Activated CD8-positive, alpha-beta T cell treated with anti-CD3 and anti-CD28 coated beads, Interleukin-2, amount 10 ng/mL, durations not matched to agents 7 days and 5 days (primary cell): ENCODE measurements at regions of chr2 and their contacts with region 1.

Region 1: GRCh38 chr2:68909793-68910674 is 38.8 kb upstream of the BMP10 start:
- DNase-seq: peak; percentile 84
- ATAC-seq: no peak
- H3K4me3 Mint-ChIP-seq: no peak overlapping the region
- H3K27ac Mint-ChIP-seq: peak overlapping the region; percentile 5
- H3K4me1 Mint-ChIP-seq: peaks cover 37% of the 10 kb centered on the region
- H3K27me3 Mint-ChIP-seq: no peaks in the 10 kb centered on the region

Region 2: DNA sequence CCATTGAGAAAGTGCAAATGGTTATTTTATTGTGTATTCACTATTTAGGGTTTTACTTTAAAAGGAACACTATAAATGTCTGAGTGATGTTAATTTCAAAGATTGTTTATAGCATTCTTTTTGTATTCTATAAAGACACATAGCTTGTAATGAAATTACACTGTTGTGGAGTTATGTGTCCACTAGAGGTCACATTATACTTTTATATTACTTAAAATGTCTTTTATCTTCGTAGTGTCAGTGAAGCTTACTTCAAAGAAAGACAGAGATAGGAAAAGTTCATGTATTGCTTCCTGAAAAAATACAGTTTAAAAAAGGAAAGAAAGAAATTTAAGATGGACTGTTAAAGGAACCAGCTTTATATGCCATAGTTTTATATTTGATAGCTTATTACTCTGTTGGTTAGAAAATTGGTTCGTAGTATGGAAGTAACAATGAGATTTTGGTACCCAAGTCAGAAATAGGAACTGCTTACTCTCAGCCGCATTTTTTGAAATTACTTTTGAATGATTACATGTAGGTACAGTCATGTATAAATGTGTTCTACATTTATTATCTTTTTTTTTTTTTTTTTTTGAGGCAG is 422.2 kb before region 1 on chr2:
- CTCF ChIA-PET with region 1: interaction called, 13 read pairs
- POLR2A ChIA-PET with region 1: no interaction called
- DNase-seq: no peak
- ATAC-seq: peak; percentile 49
- H3K4me3 Mint-ChIP-seq: no peak overlapping the region
- H3K27ac Mint-ChIP-seq: no peak overlapping the region
- H3K4me1 Mint-ChIP-seq: peaks cover 3% of the 10 kb centered on the region
- H3K27me3 Mint-ChIP-seq: no peaks in the 10 kb centered on the region

Region 3: GRCh38 chr2:68742626-68743415 is 167.2 kb before region 1 on chr2:
- CTCF ChIA-PET with region 1: interaction called, 11 read pairs
- POLR2A ChIA-PET with region 1: interaction called, 3 read pairs
- DNase-seq: peak; percentile 23
- ATAC-seq: no peak
- H3K4me3 Mint-ChIP-seq: no peak overlapping the region
- H3K27ac Mint-ChIP-seq: peak overlapping the region; percentile 12
- H3K4me1 Mint-ChIP-seq: peaks cover 93% of the 10 kb centered on the region
- H3K27me3 Mint-ChIP-seq: no peaks in the 10 kb centered on the region

Region 4: GRCh38 chr2:68766376-68766845 is 143.6 kb before region 1 on chr2:
- CTCF ChIA-PET with region 1: interaction called, 6 read pairs
- POLR2A ChIA-PET with region 1: interaction called, 10 read pairs
- DNase-seq: peak; percentile 82
- ATAC-seq: peak; percentile 79
- H3K4me3 Mint-ChIP-seq: peak overlapping the region; percentile 83
- H3K27ac Mint-ChIP-seq: peak overlapping the region; percentile 97
- H3K4me1 Mint-ChIP-seq: peaks cover 91% of the 10 kb centered on the region
- H3K27me3 Mint-ChIP-seq: no peaks in the 10 kb centered on the region

Region 5: DNA sequence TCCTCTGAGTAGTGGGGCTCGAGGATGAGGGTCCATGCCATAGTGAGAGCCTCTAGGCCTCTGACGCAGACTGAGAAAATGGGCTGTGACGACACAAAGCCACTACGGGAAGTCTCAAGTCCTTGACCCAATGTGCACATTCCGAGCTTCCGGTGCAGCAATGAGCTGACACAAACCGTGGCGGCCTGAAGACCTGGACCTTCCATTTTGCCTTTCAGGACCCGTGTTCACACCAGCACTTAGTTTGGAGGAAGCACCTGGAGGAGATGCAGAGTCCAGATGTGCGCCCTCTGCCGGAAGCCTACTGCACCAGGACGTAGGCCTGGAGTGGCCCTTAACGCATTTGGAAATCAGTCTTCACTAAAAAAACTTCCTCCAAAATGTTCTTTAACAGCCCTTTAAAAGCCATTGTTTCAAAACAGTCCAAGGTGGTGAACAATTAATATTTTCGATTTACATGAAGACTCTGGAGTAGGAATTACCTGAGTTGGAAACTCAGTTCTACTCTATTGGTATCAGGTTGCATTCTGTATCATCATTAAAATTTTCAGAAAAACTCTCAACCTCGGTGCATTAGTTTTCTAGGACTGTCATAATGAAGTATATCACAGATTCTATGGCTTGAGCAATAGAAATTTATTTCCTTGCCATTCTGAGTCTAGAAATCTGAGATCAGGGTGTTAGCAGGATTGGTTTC is 72.7 kb before region 1 on chr2:
- CTCF ChIA-PET with region 1: interaction called, 11 read pairs
- POLR2A ChIA-PET with region 1: no interaction called
- DNase-seq: peak; percentile 80
- ATAC-seq: peak; percentile 82
- H3K4me3 Mint-ChIP-seq: no peak overlapping the region
- H3K27ac Mint-ChIP-seq: no peak overlapping the region
- H3K4me1 Mint-ChIP-seq: peaks cover 44% of the 10 kb centered on the region
- H3K27me3 Mint-ChIP-seq: no peaks in the 10 kb centered on the region

Region 6: DNA sequence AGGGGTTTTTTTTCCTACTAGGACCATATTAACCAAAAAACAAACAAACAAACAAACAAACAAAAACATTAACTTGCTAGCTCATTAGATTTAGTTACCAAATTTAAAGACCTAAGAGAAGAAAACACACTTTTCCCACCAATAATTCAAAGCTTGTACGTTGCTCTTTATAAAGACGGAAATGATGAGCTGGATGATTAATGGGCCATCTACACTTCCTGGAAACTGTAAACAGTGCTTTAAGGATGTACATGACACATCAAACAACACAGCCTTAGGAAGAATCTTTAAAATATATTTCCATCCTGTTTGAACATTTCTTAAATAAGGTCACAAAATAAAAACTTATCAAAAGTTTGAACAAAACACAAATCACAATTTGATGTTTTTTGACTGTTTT is 39.8 kb before region 1 on chr2:
- CTCF ChIA-PET with region 1: no interaction called
- POLR2A ChIA-PET with region 1: no interaction called
- DNase-seq: no peak
- ATAC-seq: no peak
- H3K4me3 Mint-ChIP-seq: no peak overlapping the region
- H3K27ac Mint-ChIP-seq: no peak overlapping the region
- H3K4me1 Mint-ChIP-seq: no peaks in the 10 kb centered on the region
- H3K27me3 Mint-ChIP-seq: peaks cover 7% of the 10 kb centered on the region